Caco-2 (cell line): ENCODE measurements at regions of chr16 and their contacts with region 1.

Region 1: GRCh38 chr16:11851294-11852091 is at the start of gene RSL1D1:
- DNase-seq: peak; percentile 89 to 94
- H3K4me3 ChIP-seq: peak within 1 kb of the TSS; percentile 83
- H3K4me3 Mint-ChIP-seq: peak within 1 kb of the TSS; percentile 94
- H3K27ac Mint-ChIP-seq: peak within 1 kb of the TSS; percentile 91
- H3K4me1 ChIP-seq: 0 out of 2 replicates have a peak, but pooled peaks cover 4% of the 10 kb centered on the region
- H3K4me1 Mint-ChIP-seq: peaks cover 8% of the 10 kb centered on the region
- H3K27me3 ChIP-seq: no peaks in the 10 kb centered on the region
- H3K27me3 Mint-ChIP-seq: no peaks in the 10 kb centered on the region
- CTCF ChIP-seq: no peak
- total RNA-seq, gene RSL1D1: 216 and 227 TPM in 2 replicates

Region 2: DNA sequence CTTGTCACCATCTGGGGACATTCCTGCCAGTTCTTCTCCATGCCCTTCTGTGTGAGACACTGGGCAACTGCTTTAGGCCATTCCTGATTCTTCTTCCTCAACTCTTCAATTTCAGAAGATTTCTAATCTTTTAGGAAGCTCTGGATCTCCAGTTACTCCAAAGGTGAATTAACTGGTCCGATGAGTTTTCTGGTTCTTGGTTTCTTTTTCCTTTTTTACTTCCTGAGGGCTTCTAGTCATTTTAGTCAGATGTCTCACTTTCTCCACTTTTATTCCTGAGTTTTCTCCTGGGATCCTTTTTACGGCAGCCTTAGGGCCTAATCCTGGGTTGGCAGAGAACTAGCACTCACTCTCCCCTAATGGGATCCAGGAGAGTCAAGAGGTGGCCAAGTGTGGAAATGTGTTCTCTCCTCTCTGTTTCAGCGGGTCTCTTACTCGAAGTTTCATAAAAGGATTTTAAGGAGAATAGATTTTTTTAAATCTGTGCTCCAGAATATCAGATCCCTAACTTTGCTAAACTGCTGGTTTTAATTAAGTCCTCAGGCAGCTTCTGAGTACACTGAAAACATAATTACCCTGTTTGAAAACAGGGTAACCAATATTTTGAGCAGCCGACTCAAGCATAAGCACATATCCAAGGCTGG is 398.6 kb before region 1 on chr16:
- CTCF ChIA-PET with region 1: no interaction called
- POLR2A ChIA-PET with region 1: no interaction called
- intact Hi-C with region 1: no loop called
- DNase-seq: no peak
- H3K4me3 ChIP-seq: no peak overlapping the region
- H3K4me3 Mint-ChIP-seq: no peak overlapping the region
- H3K27ac Mint-ChIP-seq: no peak overlapping the region
- H3K4me1 ChIP-seq: no peaks in the 10 kb centered on the region
- H3K4me1 Mint-ChIP-seq: no peaks in the 10 kb centered on the region
- H3K27me3 ChIP-seq: no peaks in the 10 kb centered on the region
- H3K27me3 Mint-ChIP-seq: peaks cover 5% of the 10 kb centered on the region
- CTCF ChIP-seq: no peak

Region 3: GRCh38 chr16:11742539-11743307 is 108.8 kb before region 1 on chr16 and contains the start of gene TXNDC11:
- CTCF ChIA-PET with region 1: no interaction called
- POLR2A ChIA-PET with region 1: no interaction called
- intact Hi-C with region 1: loop called (anchors 5 kb)
- DNase-seq: peak; percentile 98 to 99
- H3K4me3 ChIP-seq: peak within 1 kb of the TSS; percentile 84
- H3K4me3 Mint-ChIP-seq: peak within 1 kb of the TSS; percentile 92
- H3K27ac Mint-ChIP-seq: peak within 1 kb of the TSS; percentile 95
- H3K4me1 ChIP-seq: peaks cover 48% of the 10 kb centered on the region
- H3K4me1 Mint-ChIP-seq: peaks cover 16% of the 10 kb centered on the region
- H3K27me3 ChIP-seq: no peaks in the 10 kb centered on the region
- H3K27me3 Mint-ChIP-seq: no peaks in the 10 kb centered on the region
- CTCF ChIP-seq: no peak
- total RNA-seq, gene TXNDC11: 23.5 and 24.3 TPM in 2 replicates

Region 4: DNA sequence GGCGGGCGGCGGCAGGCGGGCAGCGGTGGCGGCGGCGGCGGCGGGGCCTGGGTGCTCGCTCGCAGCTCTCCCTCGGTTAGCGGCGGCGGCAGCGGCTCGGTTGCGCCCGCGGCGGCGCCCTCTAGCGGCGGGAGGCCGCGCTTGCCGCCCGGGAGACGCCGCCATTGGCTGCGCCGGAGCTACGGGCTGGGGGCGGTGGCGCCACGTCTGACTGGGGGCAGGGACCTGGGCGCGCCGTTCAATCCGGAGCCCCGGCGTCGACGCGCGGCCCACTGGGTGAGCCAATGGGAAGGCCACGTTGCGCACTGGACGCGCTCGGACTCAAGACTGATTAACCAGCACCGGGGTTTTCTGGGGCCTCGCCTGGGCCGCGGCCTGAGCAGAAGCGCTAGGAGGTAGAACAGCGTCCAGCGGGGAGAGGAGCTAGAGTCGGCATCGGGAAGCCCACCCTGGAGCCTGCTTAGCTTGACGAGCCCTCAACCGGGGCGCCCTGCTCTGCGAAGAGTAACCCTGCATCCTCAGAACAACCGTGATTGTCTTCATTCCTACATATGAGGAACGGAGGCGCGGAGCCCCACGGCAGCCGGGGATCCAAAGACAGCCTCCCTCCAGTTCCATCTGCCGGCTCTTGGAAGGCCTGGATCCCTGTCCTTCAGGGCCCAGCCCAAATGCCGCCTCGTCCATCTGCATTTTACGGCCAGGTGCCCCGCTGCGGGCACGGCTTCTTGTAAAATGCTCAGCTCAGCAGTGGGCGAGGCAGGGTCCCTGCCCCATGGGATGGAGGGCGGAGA is 54.1 kb before region 1 on chr16 and contains the start of gene ZC3H7A:
- CTCF ChIA-PET with region 1: no interaction called
- POLR2A ChIA-PET with region 1: no interaction called
- intact Hi-C with region 1: loop called (anchors 2 kb)
- DNase-seq: peak; percentile 95 to 96
- H3K4me3 ChIP-seq: peak within 1 kb of the TSS; percentile 93
- H3K4me3 Mint-ChIP-seq: peak within 1 kb of the TSS; percentile 96
- H3K27ac Mint-ChIP-seq: peak within 1 kb of the TSS; percentile 91
- H3K4me1 ChIP-seq: peaks cover 21% of the 10 kb centered on the region
- H3K4me1 Mint-ChIP-seq: peaks cover 17% of the 10 kb centered on the region
- H3K27me3 ChIP-seq: no peaks in the 10 kb centered on the region
- H3K27me3 Mint-ChIP-seq: no peaks in the 10 kb centered on the region
- CTCF ChIP-seq: peak; percentile 16 to 54
- total RNA-seq, gene ZC3H7A: 42.0 TPM in 2 replicates